Left ventricle myocardium superior (tissue), 1 donor: ENCODE measurements at regions of chr12 and their contacts with region 1.

Region 1: DNA sequence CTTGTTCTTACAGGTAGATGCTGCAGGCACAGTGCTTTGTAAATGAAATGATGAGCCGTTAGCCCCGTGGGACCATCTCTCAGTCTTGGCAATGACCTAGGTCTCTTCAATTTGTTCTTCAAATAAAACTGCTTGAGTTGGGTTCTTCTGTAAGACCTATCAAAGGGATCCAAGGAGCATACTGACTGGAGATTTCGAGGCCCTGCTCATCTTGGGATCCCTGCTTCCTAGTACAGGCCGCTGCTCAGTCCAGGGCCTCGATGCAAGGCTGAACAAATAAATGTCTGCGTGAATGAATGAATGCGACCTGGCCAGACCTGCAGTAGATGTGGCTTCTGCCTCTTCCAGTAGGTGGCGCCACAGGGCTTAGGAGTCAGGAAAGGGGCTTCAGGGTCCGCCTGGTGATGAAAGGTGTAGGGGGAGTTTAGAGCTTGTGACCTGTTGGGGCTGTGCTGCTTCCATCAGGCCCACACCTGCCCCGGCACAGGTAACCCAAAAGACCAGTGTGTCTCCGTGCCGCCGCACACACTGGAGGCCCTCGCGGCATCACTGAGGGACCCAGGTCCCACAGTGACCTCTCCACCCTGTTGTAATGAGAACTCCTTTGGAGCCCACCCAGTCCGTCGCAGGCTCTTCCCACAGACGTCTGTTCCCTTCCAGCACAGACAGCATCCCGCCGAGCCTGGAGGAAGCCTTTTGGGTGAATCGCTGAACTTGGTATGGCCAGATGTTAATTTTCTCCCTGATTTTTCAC is 4.4 kb downstream of the CACNA1C start:
- DNase-seq: peak; percentile 75
- ATAC-seq: peak; percentile 6

Region 2: DNA sequence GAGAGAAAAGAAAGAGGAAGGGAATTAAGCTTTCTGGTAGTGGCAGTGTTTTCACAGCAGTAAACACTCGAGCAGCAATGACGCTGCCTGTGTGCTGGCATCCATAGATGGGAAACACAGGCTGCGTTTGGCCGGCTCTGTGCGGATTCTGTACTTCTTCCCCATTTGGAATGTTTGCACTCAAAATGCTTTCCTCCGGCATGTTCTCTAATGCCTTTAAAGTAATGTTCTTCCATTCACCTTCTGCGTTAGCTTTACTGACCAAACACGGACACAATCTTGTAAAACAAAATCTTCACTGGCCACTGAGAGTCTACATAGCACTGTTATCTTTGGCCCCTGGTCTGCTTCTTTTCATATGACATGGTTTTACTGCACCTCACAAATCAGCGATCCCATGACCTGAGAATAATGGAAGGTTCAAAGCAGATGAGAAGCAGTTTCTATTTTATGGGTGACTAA is 84.3 kb before region 1 on chr12:
- intact Hi-C with region 1: no loop called
- DNase-seq: peak; percentile 57
- ATAC-seq: peak; percentile 71

Region 3: DNA sequence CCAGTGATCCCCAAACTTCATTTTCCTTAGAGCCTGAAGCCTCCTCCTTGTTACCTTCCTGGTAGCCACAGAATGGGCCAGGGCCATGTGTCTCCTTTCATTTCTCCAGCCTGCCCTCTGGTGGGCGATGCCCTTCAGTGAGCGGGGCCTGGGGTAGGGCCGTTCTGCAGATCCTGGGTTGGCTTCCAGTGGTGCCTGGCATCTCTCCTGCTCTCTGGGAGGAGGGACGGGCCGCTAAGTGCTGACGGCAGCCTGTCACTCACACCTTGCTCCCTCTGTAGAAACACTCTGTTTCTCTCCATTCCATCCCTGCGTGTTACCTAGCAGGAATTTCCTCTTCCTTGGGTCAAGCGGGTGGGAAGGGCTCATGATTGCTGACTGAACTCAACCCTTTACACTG is 227.6 kb after region 1 on chr12:
- intact Hi-C with region 1: loop called (anchors 10 kb)
- DNase-seq: peak; percentile 90
- ATAC-seq: peak; percentile 79